ENCODE measurements at regions of chr11 and their contacts with region 1.

Region 1: DNA sequence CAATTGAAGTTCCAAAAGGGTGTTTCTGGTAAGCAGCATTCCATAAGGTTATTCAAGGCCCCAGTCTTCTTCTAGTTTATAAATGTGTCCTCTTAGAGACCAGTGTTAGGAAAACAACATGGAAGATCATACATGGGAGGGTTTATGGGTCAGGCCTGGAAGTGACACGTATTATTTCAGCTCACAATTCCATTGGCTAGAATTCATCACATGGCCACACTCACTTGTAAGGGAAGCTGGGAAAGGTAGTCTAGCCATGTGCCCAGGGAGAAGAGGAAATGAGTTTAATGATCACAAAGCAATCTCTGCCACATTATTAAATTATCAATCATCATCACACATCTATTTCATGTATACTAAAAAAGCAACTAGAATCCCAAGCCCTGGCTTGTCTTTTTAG is 181.7 kb upstream of the TBCEL start:
- DNase-seq: no peak
- ATAC-seq: no peak
- H3K4me3 ChIP-seq: no peak overlapping the region
- H3K4me3 Mint-ChIP-seq: no peak overlapping the region
- H3K27ac ChIP-seq: no peak overlapping the region
- H3K27ac Mint-ChIP-seq: no peak overlapping the region
- H3K4me1 ChIP-seq: no peaks in the 10 kb centered on the region
- H3K4me1 Mint-ChIP-seq: no peaks in the 10 kb centered on the region
- H3K27me3 ChIP-seq: peaks cover 0 to 3% of the 10 kb centered on the region in 2 experiments
- H3K27me3 Mint-ChIP-seq: peaks cover 3 to 13% of the 10 kb centered on the region in 2 donors

Region 2: DNA sequence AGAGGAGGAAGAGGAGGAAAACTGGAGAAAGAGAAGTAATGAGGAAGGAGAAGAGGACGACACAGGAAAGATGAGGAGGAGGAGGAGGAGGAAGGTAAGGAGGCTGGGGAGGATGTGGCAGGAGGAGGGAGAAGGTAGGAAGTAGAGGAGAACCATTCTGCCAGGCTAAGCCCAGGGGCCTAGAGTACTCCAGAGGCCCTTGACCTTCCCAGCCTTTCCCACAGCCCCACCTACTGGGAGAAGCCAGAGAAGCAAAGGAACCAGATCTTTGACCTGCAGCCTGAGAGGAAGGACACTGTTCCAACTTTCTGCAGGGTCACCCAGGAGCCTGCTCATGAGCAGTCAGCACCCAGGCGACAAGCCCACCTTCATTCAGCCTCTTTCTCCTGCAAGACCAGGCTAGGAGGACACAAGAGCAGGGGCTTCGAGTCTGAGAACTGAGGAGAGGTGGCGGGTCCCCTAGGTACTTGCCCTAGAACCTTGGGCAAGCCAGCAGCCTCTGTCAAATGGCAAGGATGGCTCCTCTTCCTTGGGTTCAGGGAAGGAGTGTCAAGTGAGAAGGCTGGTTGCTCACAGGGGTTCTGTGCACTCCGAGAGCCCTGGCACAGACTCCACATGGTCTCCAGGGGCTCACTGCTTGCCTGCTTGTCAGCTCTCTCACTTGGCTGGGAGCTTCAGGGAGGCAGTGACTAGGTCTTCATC is 659.3 kb before region 1 on chr11:
- CTCF ChIA-PET with region 1: no interaction called
- POLR2A ChIA-PET with region 1: no interaction called
- DNase-seq: peak in 2 of 35 experiments; percentile 3 to 17
- ATAC-seq: no peak
- H3K4me3 ChIP-seq: no peak overlapping the region
- H3K4me3 Mint-ChIP-seq: no peak overlapping the region
- H3K27ac ChIP-seq: no peak overlapping the region
- H3K27ac Mint-ChIP-seq: no peak overlapping the region
- H3K4me1 ChIP-seq: no peaks in the 10 kb centered on the region
- H3K4me1 Mint-ChIP-seq: no peaks in the 10 kb centered on the region
- H3K27me3 ChIP-seq: peaks cover 0 to 38% of the 10 kb centered on the region in 2 experiments
- H3K27me3 Mint-ChIP-seq: peaks cover 7 to 32% of the 10 kb centered on the region in 2 donors

Region 3: DNA sequence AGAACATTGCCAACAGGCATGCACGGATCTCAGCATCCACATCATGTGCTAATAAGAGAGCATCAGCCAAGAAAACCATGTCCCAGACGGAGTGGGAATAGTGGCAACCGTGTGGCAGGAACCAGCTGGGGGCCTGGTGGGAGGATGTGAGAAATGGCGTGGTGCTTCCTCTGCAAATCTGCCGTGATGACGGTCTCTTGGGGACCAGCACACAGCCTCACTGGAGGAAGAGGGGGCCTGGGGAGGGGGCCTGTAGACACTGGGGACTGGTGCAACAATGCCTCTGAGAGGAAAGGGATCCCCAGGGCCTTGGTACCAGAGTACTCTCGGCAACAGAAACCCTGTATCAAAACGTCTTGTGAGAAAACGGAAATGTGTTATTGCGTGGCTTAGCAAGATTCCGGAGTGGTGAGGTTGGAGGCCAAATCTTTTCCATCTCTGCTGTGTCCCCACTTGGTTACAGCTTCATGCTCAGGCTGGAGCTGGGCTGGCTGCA is 27.4 kb after region 1 on chr11:
- CTCF ChIA-PET with region 1: no interaction called
- POLR2A ChIA-PET with region 1: no interaction called
- DNase-seq: no peak
- ATAC-seq: no peak
- H3K4me3 ChIP-seq: no peak overlapping the region
- H3K4me3 Mint-ChIP-seq: no peak overlapping the region
- H3K27ac ChIP-seq: no peak overlapping the region
- H3K27ac Mint-ChIP-seq: no peak overlapping the region
- H3K4me1 ChIP-seq: no peaks in the 10 kb centered on the region
- H3K4me1 Mint-ChIP-seq: no peaks in the 10 kb centered on the region
- H3K27me3 ChIP-seq: peaks cover 0 to 19% of the 10 kb centered on the region in 2 experiments
- H3K27me3 Mint-ChIP-seq: peaks cover 19 to 29% of the 10 kb centered on the region in 2 donors

Region 4: DNA sequence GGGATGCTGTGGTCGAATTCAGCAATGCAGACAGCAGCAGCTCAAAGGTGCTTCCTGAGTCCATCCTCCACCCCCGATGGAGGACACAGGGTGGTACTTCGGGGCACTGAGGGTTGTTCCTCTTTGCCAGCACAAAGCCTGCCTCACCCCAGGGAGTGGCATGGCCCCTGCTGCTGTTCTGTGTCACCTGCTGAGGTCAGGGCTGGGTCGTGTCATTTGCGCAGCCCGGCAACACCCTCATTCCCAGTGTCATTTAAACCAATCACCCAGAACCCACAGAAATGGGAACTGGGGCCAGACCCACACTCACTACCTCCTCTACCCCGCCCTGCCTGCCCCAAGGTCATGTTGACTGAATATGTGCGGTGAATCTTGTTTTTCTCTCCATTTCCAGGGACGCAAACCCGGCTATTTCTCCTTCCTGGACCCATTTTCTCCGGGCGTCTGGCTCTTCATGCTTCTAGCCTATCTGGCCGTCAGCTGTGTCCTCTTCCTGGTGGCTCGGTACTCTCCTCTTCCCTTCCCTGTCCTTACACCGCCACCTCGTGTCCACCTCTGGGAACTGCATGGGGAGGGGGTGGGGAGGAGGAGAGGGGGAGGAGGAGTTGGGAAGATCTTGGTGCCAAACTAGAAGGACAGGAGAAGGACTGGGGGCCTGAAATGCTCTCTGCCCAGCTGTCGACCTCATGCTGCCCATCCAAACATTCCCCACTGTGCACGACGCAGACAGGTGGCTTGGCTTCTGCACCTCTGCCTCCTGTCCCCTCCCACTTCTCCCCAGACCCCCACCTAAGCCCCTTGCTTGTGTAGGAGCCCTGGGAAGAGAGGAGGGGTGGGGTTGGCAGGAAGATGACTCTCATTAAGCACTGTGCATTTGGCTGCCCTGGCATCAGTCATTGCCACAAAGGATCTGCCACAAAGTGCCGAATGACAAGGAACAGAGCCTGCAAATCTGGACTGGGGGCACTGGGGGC is 110.6 kb after region 1 on chr11:
- CTCF ChIA-PET with region 1: interaction called in 1 of 2 experiments, 10 read pairs
- POLR2A ChIA-PET with region 1: no interaction called
- DNase-seq: peak in 33 of 35 experiments; percentile 12 to 59 (median 42)
- ATAC-seq: peak; percentile 50 to 69 (median 57)
- H3K4me3 ChIP-seq: peak overlapping the region; percentile 26 to 35
- H3K4me3 Mint-ChIP-seq: peak overlapping the region; percentile 53 to 82 (median 68)
- H3K27ac ChIP-seq: no peak overlapping the region
- H3K27ac Mint-ChIP-seq: no peak overlapping the region
- H3K4me1 ChIP-seq: peaks cover 0 to 19% of the 10 kb centered on the region in 2 experiments
- H3K4me1 Mint-ChIP-seq: peaks cover 17 to 22% (median 19%) of the 10 kb centered on the region in 3 donors
- H3K27me3 ChIP-seq: peaks cover 2 to 22% of the 10 kb centered on the region in 2 experiments
- H3K27me3 Mint-ChIP-seq: peaks cover 11 to 36% of the 10 kb centered on the region in 2 donors